Activated B cell treated with CpG ODN at 0.5 μM for 24 hours (primary cell): ENCODE measurements at regions of chr15 and their contacts with region 1.

Region 1: GRCh38 chr15:33098094-33099040 is 96.1 kb downstream of the FMN1 start:
- DNase-seq: no peak
- ATAC-seq: no peak
- H3K4me3 Mint-ChIP-seq: no peak overlapping the region
- H3K27ac Mint-ChIP-seq: no peak overlapping the region
- H3K4me1 Mint-ChIP-seq: no peaks in the 10 kb centered on the region
- H3K27me3 Mint-ChIP-seq: peaks cover 2% of the 10 kb centered on the region
- CTCF ChIP-seq: no peak

Region 2: GRCh38 chr15:32104061-32104995 is 994.0 kb before region 1 on chr15:
- CTCF ChIA-PET with region 1: no interaction called
- POLR2A ChIA-PET with region 1: no interaction called
- intact Hi-C with region 1: no loop called
- DNase-seq: no peak
- ATAC-seq: no peak
- H3K4me3 Mint-ChIP-seq: no peak overlapping the region
- H3K27ac Mint-ChIP-seq: no peak overlapping the region
- H3K4me1 Mint-ChIP-seq: no peaks in the 10 kb centered on the region
- H3K27me3 Mint-ChIP-seq: peaks cover 4% of the 10 kb centered on the region
- CTCF ChIP-seq: no peak

Region 3: GRCh38 chr15:32936283-32936918 is 162.0 kb before region 1 on chr15:
- CTCF ChIA-PET with region 1: no interaction called
- POLR2A ChIA-PET with region 1: no interaction called
- intact Hi-C with region 1: no loop called
- DNase-seq: no peak
- ATAC-seq: no peak
- H3K4me3 Mint-ChIP-seq: no peak overlapping the region
- H3K27ac Mint-ChIP-seq: no peak overlapping the region
- H3K4me1 Mint-ChIP-seq: peaks cover 2% of the 10 kb centered on the region
- H3K27me3 Mint-ChIP-seq: peaks cover 22% of the 10 kb centered on the region
- CTCF ChIP-seq: no peak

Region 4: DNA sequence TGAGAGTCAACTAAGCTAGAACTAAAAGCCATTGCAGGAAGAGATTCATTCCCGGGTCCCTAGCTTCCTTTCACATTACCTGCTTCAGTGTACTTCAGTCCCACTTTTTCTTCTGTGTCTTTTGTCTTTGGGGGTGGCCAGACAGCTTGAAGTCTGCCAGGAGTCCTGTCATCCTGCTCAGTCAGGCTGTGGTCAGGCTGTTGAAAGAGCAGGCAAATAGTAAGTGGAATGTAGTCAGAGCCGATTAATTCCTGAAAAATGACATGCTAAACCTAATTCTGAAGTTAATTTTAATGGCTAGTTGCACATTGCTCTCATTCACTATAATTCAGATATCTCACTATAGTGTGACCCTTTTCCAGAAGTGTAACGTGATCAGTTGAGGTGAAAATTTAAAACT is 33.5 kb before region 1 on chr15:
- CTCF ChIA-PET with region 1: no interaction called
- POLR2A ChIA-PET with region 1: no interaction called
- intact Hi-C with region 1: no loop called
- DNase-seq: no peak
- ATAC-seq: no peak
- H3K4me3 Mint-ChIP-seq: no peak overlapping the region
- H3K27ac Mint-ChIP-seq: no peak overlapping the region
- H3K4me1 Mint-ChIP-seq: peaks cover 14% of the 10 kb centered on the region
- H3K27me3 Mint-ChIP-seq: peaks cover 17% of the 10 kb centered on the region
- CTCF ChIP-seq: no peak

Region 5: DNA sequence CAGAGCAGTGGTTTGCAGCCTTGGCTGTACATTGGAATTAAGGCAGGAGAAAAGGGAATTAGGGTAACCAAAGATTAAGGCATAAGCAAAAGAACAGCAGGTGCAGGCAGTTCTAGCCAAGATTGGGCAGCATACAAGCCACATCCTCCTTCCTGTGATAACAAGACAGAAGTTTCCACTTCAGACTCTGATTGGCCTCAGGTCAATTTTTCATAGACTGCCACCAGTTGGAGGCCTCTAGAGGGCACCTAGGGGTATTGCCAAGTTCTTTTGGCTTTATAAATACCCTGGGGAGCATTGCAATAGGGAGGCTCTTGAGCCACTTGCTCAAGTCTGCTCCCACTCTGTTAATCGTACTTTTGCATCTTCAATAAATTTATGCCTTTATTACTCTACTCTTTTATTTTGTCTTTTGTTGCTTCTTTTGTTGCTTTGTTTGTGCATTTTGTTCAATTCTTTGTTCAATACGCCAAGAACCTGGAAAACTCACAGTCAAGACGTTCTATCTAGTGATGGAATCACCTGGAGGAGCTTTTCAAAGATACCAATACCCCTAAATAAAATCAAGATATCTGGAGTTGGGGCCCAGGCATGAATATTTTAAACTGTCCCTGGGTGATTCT is 128.3 kb after region 1 on chr15:
- CTCF ChIA-PET with region 1: no interaction called
- POLR2A ChIA-PET with region 1: no interaction called
- intact Hi-C with region 1: loop called (anchors 5 kb)
- DNase-seq: no peak
- ATAC-seq: peak; percentile 75
- H3K4me3 Mint-ChIP-seq: no peak overlapping the region
- H3K27ac Mint-ChIP-seq: no peak overlapping the region
- H3K4me1 Mint-ChIP-seq: peaks cover 2% of the 10 kb centered on the region
- H3K27me3 Mint-ChIP-seq: peaks cover 5% of the 10 kb centered on the region
- CTCF ChIP-seq: no peak